ENCODE measurements at regions of chr6 and their contacts with region 1.

Region 1: DNA sequence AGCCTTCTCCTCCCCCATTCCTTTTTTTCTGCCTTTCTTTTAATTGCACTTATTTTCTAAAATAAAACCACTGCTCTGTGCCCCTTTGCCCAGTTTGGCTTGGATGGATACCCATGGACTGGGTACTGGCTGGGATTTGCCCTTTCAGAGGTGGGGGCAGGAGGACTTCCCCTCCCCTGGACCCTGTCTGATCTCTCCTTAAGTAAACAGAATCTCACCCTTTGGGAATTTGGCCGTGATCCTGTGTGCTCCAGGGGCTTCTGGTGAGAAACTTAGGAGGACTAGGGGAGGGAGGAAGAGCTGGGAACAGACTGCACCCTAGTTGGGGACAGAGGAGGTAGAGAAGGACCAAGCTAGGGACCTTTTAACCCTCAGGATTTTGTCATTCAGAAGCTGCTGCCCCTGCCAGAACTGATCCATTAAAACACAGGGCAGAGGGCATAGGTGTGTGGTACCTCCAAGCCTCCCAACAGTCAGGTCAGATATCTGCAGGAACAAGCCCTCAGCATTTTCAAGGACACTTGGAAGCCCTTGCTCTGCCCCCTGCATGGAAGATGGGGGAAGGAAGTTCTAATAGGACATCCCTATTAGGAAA is 7.3 kb downstream of the FOXP4 start:
- DNase-seq: no peak
- ATAC-seq: no peak
- H3K4me3 ChIP-seq: no peak overlapping the region
- H3K27ac ChIP-seq: no peak overlapping the region
- H3K4me1 ChIP-seq: no peaks in the 10 kb centered on the region
- H3K27me3 ChIP-seq: no peaks in the 10 kb centered on the region
- CTCF ChIP-seq: no peak

Region 2: GRCh38 chr6:41399424-41399823 is 154.1 kb before region 1 on chr6:
- CTCF ChIA-PET with region 1: interaction called, 11 read pairs
- POLR2A ChIA-PET with region 1: no interaction called
- in situ Hi-C with region 1: no loop called
- intact Hi-C with region 1: no loop called
- DNase-seq: no peak
- ATAC-seq: no peak
- H3K4me3 ChIP-seq: no peak overlapping the region
- H3K27ac ChIP-seq: no peak overlapping the region
- H3K4me1 ChIP-seq: no peaks in the 10 kb centered on the region
- H3K27me3 ChIP-seq: peaks cover 8% of the 10 kb centered on the region
- CTCF ChIP-seq: no peak